ENCODE measurements at regions of chr12 and their contacts with region 1.

Region 1: DNA sequence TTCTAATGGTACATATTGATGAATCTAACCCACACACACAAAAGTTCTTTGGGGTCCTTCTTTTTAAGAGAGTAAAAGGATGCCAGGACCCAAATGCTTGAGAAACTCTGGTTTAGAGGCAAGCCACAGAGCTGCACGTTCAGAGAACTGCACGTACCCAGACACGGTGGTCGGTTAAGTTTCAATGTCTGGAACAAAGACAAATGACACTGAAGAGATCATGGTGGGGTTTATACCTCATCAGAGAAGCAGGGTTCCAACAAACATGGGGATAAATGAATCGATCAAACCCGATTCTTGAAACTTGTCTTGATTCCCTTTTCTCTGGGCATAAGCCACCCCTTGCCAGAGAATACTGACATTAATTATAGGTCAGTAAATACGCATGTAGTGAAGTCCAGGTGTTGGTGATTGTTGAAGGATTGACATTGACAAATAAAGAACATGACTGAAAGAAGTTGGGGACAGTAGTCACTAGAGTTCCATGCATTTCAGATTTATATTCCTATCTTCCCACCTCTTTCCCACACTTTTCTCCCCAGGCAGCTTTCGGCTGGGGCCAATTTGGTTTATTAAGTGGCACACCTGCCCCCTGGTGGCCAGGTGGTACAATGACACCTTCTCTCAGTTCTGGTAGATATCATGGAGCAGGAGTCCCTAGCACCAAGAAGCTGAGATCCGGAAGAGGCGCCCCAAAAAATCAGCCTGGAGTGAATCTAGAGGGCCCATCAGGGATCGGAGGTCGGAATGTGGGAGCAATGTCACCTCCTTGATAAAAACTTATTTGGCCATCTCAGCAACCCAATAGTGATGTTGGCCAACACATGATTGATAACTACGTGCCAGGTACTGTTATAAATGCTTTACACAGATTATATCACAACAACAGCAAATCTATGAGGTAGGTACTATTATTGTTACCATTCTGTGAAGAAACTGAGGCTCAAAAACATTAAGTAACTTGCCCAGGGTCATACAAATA is 17.8 kb upstream of the HDAC7 start:
- DNase-seq: peak; percentile 50 to 86 (median 62)
- ATAC-seq: peak; percentile 28
- H3K4me3 ChIP-seq: no peak overlapping the region
- H3K4me3 Mint-ChIP-seq: no peak overlapping the region
- H3K27ac ChIP-seq: no peak overlapping the region
- H3K27ac Mint-ChIP-seq: peak overlapping the region; percentile 7
- H3K4me1 ChIP-seq: peaks cover 48% of the 10 kb centered on the region
- H3K4me1 Mint-ChIP-seq: peaks cover 55% of the 10 kb centered on the region
- H3K27me3 ChIP-seq: no peaks in the 10 kb centered on the region
- H3K27me3 Mint-ChIP-seq: no peaks in the 10 kb centered on the region
- CTCF ChIP-seq: peak; percentile 90

Region 2: GRCh38 chr12:46303039-46303666 is 1534.3 kb before region 1 on chr12:
- CTCF ChIA-PET with region 1: no interaction called
- POLR2A ChIA-PET with region 1: no interaction called
- intact Hi-C with region 1: no loop called
- DNase-seq: peak; percentile 15 to 86 (median 44)
- ATAC-seq: peak; percentile 89
- H3K4me3 ChIP-seq: no peak overlapping the region
- H3K4me3 Mint-ChIP-seq: no peak overlapping the region
- H3K27ac ChIP-seq: no peak overlapping the region
- H3K27ac Mint-ChIP-seq: no peak overlapping the region
- H3K4me1 ChIP-seq: no peaks in the 10 kb centered on the region
- H3K4me1 Mint-ChIP-seq: peaks cover 18% of the 10 kb centered on the region
- H3K27me3 ChIP-seq: no peaks in the 10 kb centered on the region
- H3K27me3 Mint-ChIP-seq: no peaks in the 10 kb centered on the region
- CTCF ChIP-seq: peak; percentile 96

Region 3: GRCh38 chr12:47651368-47652254 is 185.9 kb before region 1 on chr12:
- CTCF ChIA-PET with region 1: no interaction called
- POLR2A ChIA-PET with region 1: no interaction called
- intact Hi-C with region 1: loop called (anchors 1 to 2 kb)
- DNase-seq: peak; percentile 19 to 80 (median 34)
- ATAC-seq: peak; percentile 97
- H3K4me3 ChIP-seq: peak overlapping the region; percentile 3
- H3K4me3 Mint-ChIP-seq: peak overlapping the region; percentile 43
- H3K27ac ChIP-seq: no peak overlapping the region
- H3K27ac Mint-ChIP-seq: no peak overlapping the region
- H3K4me1 ChIP-seq: peaks cover 9% of the 10 kb centered on the region
- H3K4me1 Mint-ChIP-seq: peaks cover 9% of the 10 kb centered on the region
- H3K27me3 ChIP-seq: no peaks in the 10 kb centered on the region
- H3K27me3 Mint-ChIP-seq: no peaks in the 10 kb centered on the region
- CTCF ChIP-seq: peak; percentile 72

Region 4: GRCh38 chr12:47742253-47742825 is 95.1 kb before region 1 on chr12:
- CTCF ChIA-PET with region 1: interaction called, 86 read pairs
- POLR2A ChIA-PET with region 1: interaction called, 7 read pairs
- intact Hi-C with region 1: loop called (anchors 1 kb)
- DNase-seq: peak; percentile 57 to 83 (median 68)
- ATAC-seq: peak; percentile 38
- H3K4me3 ChIP-seq: no peak overlapping the region
- H3K4me3 Mint-ChIP-seq: no peak overlapping the region
- H3K27ac ChIP-seq: no peak overlapping the region
- H3K27ac Mint-ChIP-seq: no peak overlapping the region
- H3K4me1 ChIP-seq: peaks cover 38% of the 10 kb centered on the region
- H3K4me1 Mint-ChIP-seq: peaks cover 42% of the 10 kb centered on the region
- H3K27me3 ChIP-seq: no peaks in the 10 kb centered on the region
- H3K27me3 Mint-ChIP-seq: no peaks in the 10 kb centered on the region
- CTCF ChIP-seq: peak; percentile 100

Region 5: DNA sequence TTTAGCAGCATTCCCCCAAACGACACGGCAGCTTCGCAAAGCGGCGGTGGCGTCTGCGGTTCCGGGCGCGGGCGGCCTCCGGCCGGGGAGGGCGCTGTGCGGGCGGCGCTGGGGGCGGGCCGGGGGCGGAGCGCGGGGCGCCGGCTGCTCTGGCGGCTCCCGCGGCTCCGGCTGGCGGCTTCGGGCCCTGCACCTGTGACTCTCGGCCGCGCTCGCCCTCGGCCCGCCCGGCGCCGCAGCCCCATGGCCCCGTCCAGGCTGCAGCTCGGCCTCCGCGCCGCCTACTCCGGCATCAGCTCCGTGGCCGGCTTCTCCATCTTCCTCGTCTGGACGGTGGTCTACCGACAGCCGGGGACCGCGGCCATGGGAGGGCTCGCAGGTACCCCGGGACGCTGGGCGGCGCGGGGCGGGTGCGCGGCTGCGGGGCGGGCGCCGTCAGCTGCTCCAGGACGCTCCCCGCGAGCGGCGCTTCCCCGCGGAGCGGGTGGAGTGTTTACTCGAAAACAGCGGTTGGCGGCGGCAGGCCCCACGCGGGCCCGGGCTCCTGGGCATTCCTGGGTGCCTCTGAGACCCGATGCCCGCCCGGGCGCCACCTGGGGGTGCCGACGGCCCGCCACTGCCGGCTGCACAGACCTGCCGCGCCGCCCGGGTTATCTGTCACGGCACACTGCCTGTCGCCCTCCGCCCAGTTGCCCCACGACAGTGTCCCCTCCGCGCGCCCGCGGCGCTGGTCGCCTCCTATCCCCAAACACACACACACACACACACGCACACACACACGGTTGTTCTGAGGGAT is 64.2 kb before region 1 on chr12 and contains the start of gene SLC48A1:
- CTCF ChIA-PET with region 1: interaction called, 20 read pairs
- POLR2A ChIA-PET with region 1: interaction called, 5 read pairs
- intact Hi-C with region 1: no loop called
- DNase-seq: peak; percentile 57 to 91 (median 72)
- ATAC-seq: peak; percentile 94
- H3K4me3 ChIP-seq: peak within 1 kb of the TSS; percentile 54
- H3K4me3 Mint-ChIP-seq: peak within 1 kb of the TSS; percentile 92
- H3K27ac ChIP-seq: no peak within 1 kb of the TSS
- H3K27ac Mint-ChIP-seq: peak within 1 kb of the TSS; percentile 77
- H3K4me1 ChIP-seq: peaks cover 32% of the 10 kb centered on the region
- H3K4me1 Mint-ChIP-seq: peaks cover 29% of the 10 kb centered on the region
- H3K27me3 ChIP-seq: no peaks in the 10 kb centered on the region
- H3K27me3 Mint-ChIP-seq: no peaks in the 10 kb centered on the region
- CTCF ChIP-seq: peak; percentile 52
- total RNA-seq, gene SLC48A1: 4.5 to 5.8 TPM

Region 6: GRCh38 chr12:47785036-47785886 is 52.2 kb before region 1 on chr12:
- CTCF ChIA-PET with region 1: interaction called, 23 read pairs
- POLR2A ChIA-PET with region 1: interaction called, 3 read pairs
- intact Hi-C with region 1: no loop called
- DNase-seq: no peak
- ATAC-seq: no peak
- H3K4me3 ChIP-seq: no peak overlapping the region
- H3K4me3 Mint-ChIP-seq: no peak overlapping the region
- H3K27ac ChIP-seq: no peak overlapping the region
- H3K27ac Mint-ChIP-seq: no peak overlapping the region
- H3K4me1 ChIP-seq: no peaks in the 10 kb centered on the region
- H3K4me1 Mint-ChIP-seq: no peaks in the 10 kb centered on the region
- H3K27me3 ChIP-seq: no peaks in the 10 kb centered on the region
- H3K27me3 Mint-ChIP-seq: no peaks in the 10 kb centered on the region
- CTCF ChIP-seq: no peak

Region 7: DNA sequence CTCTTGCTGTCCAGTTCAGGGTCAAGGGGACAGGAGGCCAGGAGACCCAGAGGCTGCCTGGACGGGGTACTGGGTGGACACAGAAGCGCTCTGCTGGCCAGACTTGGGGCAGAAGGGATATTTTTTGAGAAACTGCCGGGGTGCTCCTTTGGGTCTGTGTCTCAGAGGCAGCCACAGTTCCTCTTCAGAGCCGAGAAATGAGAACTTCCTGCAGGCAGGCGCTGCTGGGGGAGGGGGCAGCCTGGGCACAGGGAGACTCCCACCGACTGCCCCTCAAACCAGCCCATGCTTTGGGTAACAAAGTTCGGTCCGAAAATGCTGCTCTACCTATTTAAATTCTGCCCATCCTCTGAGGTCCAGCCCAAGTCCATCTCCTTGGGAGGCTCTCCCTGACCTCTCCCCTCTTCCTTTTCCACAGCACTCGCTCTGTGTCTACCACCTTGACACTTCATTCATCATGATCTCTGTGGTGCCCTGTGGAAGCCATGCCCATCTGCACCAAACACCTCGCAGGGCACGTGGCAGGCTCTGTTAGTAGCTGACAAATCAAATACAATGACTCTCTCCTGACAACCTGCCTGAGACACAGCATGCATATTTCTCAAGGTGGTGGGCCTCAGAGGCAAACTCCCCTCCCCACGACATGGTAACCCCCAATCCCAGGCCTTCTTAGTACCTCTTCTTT is 34.1 kb before region 1 on chr12:
- CTCF ChIA-PET with region 1: interaction called, 65 read pairs
- POLR2A ChIA-PET with region 1: interaction called, 274 read pairs
- intact Hi-C with region 1: loop called in 1 of 2 experiments (anchors 2 kb)
- DNase-seq: no peak
- ATAC-seq: no peak
- H3K4me3 ChIP-seq: no peak overlapping the region
- H3K4me3 Mint-ChIP-seq: peak overlapping the region; percentile 75
- H3K27ac ChIP-seq: peak overlapping the region; percentile 18 to 23
- H3K27ac Mint-ChIP-seq: peak overlapping the region; percentile 96
- H3K4me1 ChIP-seq: peaks cover 100% of the 10 kb centered on the region
- H3K4me1 Mint-ChIP-seq: peaks cover 88% of the 10 kb centered on the region
- H3K27me3 ChIP-seq: no peaks in the 10 kb centered on the region
- H3K27me3 Mint-ChIP-seq: no peaks in the 10 kb centered on the region
- CTCF ChIP-seq: no peak

Region 8: GRCh38 chr12:47819896-47820630 is 17.4 kb before region 1 on chr12 and contains the start of gene HDAC7:
- CTCF ChIA-PET with region 1: interaction called, 164 read pairs
- POLR2A ChIA-PET with region 1: interaction called, 274 read pairs
- intact Hi-C with region 1: loop called (anchors 2 kb)
- DNase-seq: peak in 13 of 14 experiments; percentile 62 to 90 (median 78)
- ATAC-seq: peak; percentile 59
- H3K4me3 ChIP-seq: peak within 1 kb of the TSS; percentile 89
- H3K4me3 Mint-ChIP-seq: peak within 1 kb of the TSS; percentile 98
- H3K27ac ChIP-seq: peak within 1 kb of the TSS; percentile 84 to 89
- H3K27ac Mint-ChIP-seq: peak within 1 kb of the TSS; percentile 96
- H3K4me1 ChIP-seq: peaks cover 81% of the 10 kb centered on the region
- H3K4me1 Mint-ChIP-seq: peaks cover 89% of the 10 kb centered on the region
- H3K27me3 ChIP-seq: no peaks in the 10 kb centered on the region
- H3K27me3 Mint-ChIP-seq: no peaks in the 10 kb centered on the region
- CTCF ChIP-seq: no peak
- total RNA-seq, gene HDAC7: 116 to 122 TPM

Region 9: DNA sequence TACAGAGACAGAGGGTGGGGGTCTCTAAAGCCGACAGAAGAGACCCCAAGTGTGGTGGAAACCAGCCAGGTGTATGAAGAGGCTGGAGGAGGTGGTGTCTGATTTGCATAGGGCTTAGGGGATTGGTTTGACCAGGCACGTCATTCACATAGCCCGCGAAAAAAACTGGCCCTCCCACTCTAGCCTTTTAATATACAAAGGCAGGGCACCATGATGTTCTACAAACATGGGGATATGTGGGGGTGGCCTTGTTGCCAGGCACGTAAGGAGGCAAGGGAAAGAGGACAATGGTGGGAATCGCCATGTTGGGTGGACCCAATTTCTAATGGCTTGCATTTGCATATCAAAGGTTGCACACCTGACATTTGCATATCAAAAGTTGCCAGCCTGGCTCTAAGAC is 719.1 kb after region 1 on chr12:
- CTCF ChIA-PET with region 1: no interaction called
- POLR2A ChIA-PET with region 1: no interaction called
- intact Hi-C with region 1: no loop called
- DNase-seq: no peak
- ATAC-seq: no peak
- H3K4me3 ChIP-seq: no peak overlapping the region
- H3K4me3 Mint-ChIP-seq: no peak overlapping the region
- H3K27ac ChIP-seq: no peak overlapping the region
- H3K27ac Mint-ChIP-seq: no peak overlapping the region
- H3K4me1 ChIP-seq: no peaks in the 10 kb centered on the region
- H3K4me1 Mint-ChIP-seq: no peaks in the 10 kb centered on the region
- H3K27me3 ChIP-seq: no peaks in the 10 kb centered on the region
- H3K27me3 Mint-ChIP-seq: peaks cover 44% of the 10 kb centered on the region
- CTCF ChIP-seq: no peak

Measured in CD4-positive, alpha-beta T cell (primary cell).